ENCODE measurements at regions of chr12 and their contacts with region 1.

Region 1: DNA sequence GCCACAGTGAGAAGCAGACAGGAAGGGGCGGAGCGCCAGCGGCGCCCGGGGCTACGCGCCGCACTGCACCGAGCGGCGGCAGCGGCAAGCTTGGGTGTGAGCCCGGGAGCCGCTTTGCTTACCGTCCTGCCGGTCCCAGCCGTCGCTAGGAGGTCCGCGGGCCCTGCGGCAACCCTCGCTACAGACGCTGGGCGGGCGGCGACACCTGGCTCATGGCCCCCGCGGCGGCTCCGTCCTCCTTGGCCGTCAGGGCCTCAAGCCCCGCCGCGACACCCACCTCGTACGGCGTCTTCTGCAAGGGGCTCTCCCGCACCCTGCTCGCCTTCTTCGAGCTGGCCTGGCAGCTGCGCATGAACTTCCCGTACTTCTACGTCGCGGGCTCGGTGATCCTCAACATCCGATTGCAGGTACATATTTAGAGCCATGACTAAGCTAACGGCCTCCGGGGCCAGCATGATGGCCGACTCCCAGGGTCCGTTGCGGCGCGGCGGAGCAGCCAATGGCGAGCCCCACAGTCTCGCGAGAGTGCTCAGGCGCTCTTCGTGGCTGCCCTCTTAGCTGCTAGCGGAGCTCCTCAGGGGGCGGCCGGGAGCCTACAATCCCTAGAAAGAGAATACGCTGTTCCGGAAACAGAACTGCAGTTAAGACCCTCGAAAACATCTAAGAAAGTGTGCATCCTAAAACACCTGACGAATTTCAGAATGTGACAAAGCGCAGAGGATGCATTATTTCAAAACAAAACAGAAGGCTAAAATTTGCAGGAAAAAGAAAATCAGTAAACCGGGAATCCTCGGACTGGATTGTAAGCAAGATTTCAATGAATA is at the start of gene SMIM10L1:
- DNase-seq: peak; percentile 75
- ATAC-seq: peak; percentile 96
- H3K4me3 Mint-ChIP-seq: peak within 1 kb of the TSS; percentile 97
- H3K27ac Mint-ChIP-seq: peak within 1 kb of the TSS; percentile 95
- H3K4me1 Mint-ChIP-seq: peaks cover 52% of the 10 kb centered on the region
- H3K27me3 Mint-ChIP-seq: no peaks in the 10 kb centered on the region
- CTCF ChIP-seq: no peak
- total RNA-seq, gene SMIM10L1: 7.3 and 8.8 TPM in 2 replicates

Region 2: DNA sequence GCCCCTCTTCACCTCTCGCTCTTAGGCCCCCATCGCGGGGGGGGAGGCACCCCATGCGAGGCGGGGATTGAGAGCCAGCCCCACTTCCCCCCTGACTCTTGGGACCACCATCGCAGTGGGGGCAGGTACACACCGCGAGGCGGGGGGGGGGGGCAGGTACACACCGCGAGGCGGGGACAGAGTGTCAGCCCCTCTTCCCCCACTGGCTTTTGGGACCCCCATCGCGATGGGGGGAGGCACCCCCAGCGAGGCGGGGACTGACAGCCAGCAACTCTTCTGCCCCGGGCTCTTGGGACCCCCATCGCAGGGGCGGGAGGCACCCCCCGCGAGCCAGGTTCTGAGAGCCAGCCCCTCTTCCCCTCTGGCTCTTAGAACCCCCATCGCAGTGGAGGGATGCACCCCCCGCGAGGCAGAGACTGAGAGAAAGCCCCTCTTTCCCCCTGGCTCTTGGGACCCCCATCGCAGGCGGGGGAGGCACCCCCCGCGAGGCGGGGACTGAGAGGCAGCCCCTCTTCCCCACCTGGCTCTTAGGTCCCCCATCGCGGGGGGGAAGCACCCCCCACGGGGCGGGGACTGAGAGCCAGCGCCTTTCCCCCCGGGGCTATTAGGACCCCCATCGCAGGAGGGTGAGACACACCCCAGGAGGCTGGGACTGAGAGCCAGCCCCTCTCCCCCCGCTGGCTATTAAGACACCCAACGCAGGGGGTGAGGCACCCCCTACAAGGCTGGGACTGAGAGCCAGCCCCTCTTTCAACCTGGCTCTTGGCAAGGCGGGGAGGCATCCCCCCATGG is 1766.7 kb before region 1 on chr12:
- CTCF ChIA-PET with region 1: no interaction called
- POLR2A ChIA-PET with region 1: no interaction called
- intact Hi-C with region 1: no loop called
- DNase-seq: no peak
- ATAC-seq: no peak
- H3K4me3 Mint-ChIP-seq: no peak overlapping the region
- H3K27ac Mint-ChIP-seq: no peak overlapping the region
- H3K4me1 Mint-ChIP-seq: no peaks in the 10 kb centered on the region
- H3K27me3 Mint-ChIP-seq: no peaks in the 10 kb centered on the region
- CTCF ChIP-seq: no peak

Region 3: GRCh38 chr12:10212201-10213131 is 958.9 kb before region 1 on chr12 and contains the start of gene GABARAPL1:
- CTCF ChIA-PET with region 1: no interaction called
- POLR2A ChIA-PET with region 1: no interaction called
- intact Hi-C with region 1: loop called (anchors 10 kb)
- DNase-seq: peak; percentile 59
- ATAC-seq: peak; percentile 74
- H3K4me3 Mint-ChIP-seq: peak within 1 kb of the TSS; percentile 91
- H3K27ac Mint-ChIP-seq: peak within 1 kb of the TSS; percentile 46
- H3K4me1 Mint-ChIP-seq: peaks cover 17% of the 10 kb centered on the region
- H3K27me3 Mint-ChIP-seq: peaks cover 19% of the 10 kb centered on the region
- CTCF ChIP-seq: no peak
- total RNA-seq, gene GABARAPL1: 2.1 and 2.5 TPM in 2 replicates

Region 4: DNA sequence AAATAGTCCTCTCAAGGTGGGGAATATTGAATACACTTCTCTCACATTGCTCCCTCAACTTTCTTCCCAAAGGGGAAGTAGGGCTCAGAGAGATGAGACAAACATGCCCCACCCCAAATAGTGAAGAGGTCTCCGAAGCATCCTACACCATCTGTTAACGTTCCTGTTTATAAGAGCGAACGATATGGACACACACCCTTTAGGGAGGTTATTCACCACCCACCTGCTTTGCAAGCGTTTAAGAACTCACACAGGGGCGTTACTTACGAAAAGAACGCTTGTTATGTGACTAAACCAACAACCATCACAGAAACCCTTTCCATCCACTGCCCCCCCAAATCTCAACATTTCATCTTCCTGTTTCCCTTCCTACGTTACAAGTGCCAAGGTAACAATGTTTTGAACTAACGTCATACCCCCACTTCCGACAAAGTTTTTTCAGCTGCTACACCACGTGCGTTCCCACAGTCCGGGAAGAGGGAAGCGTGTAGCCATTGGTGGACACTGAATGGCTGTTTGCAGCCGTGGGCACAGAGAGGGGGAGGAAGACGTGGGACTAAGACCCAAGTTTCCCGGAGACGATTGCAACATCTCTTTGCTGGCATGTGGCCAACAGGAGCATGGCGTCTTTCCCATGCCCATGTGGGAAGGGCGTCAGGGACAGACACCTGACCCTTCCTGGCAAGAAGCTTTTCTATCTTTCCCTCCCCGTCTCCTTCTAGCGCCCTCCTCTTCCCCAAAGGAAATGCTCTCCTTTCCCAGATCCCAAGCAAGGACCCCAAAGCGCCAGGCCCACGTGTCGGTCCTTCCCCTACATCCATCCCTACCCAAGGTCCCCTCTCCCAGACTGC is 449.5 kb before region 1 on chr12:
- CTCF ChIA-PET with region 1: no interaction called
- POLR2A ChIA-PET with region 1: no interaction called
- intact Hi-C with region 1: loop called (anchors 1 kb)
- DNase-seq: peak; percentile 36
- ATAC-seq: peak; percentile 49
- H3K4me3 Mint-ChIP-seq: peak overlapping the region; percentile 88
- H3K27ac Mint-ChIP-seq: peak overlapping the region; percentile 91
- H3K4me1 Mint-ChIP-seq: peaks cover 33% of the 10 kb centered on the region
- H3K27me3 Mint-ChIP-seq: peaks cover 8% of the 10 kb centered on the region
- CTCF ChIP-seq: no peak

Region 5: GRCh38 chr12:11071414-11071813 is 99.9 kb before region 1 on chr12:
- CTCF ChIA-PET with region 1: no interaction called
- POLR2A ChIA-PET with region 1: no interaction called
- intact Hi-C with region 1: no loop called
- DNase-seq: no peak
- ATAC-seq: no peak
- H3K4me3 Mint-ChIP-seq: no peak overlapping the region
- H3K27ac Mint-ChIP-seq: no peak overlapping the region
- H3K4me1 Mint-ChIP-seq: peaks cover 29% of the 10 kb centered on the region
- H3K27me3 Mint-ChIP-seq: no peaks in the 10 kb centered on the region
- CTCF ChIP-seq: no peak

Region 6: GRCh38 chr12:11085419-11085818 is 85.9 kb before region 1 on chr12:
- CTCF ChIA-PET with region 1: no interaction called
- POLR2A ChIA-PET with region 1: interaction called, 4 read pairs
- intact Hi-C with region 1: loop called (anchors 2 kb)
- DNase-seq: no peak
- ATAC-seq: peak; percentile 85
- H3K4me3 Mint-ChIP-seq: no peak overlapping the region
- H3K27ac Mint-ChIP-seq: peak overlapping the region; percentile 68
- H3K4me1 Mint-ChIP-seq: peaks cover 9% of the 10 kb centered on the region
- H3K27me3 Mint-ChIP-seq: no peaks in the 10 kb centered on the region
- CTCF ChIP-seq: no peak

Region 7: DNA sequence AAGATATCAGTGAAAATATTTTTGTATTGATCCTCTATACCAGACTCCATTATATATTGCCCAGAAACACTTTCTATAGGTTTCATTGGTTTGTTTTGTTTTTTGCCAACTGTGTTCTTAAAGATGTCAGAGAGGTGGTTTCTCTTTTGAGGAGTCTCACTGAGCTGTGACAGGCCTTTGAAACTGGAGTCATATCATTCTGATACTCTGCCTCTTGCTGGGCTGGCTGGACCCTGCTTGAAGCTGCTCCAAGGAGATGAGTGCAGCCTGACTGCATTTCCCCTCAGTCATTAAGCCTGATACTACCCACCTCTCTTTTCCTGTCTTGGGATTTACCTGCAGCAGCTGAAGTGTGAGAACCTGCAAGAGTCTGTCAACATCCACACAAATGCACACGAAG is 20.5 kb before region 1 on chr12:
- CTCF ChIA-PET with region 1: no interaction called
- POLR2A ChIA-PET with region 1: no interaction called
- intact Hi-C with region 1: no loop called
- DNase-seq: no peak
- ATAC-seq: no peak
- H3K4me3 Mint-ChIP-seq: no peak overlapping the region
- H3K27ac Mint-ChIP-seq: no peak overlapping the region
- H3K4me1 Mint-ChIP-seq: peaks cover 1% of the 10 kb centered on the region
- H3K27me3 Mint-ChIP-seq: no peaks in the 10 kb centered on the region
- CTCF ChIP-seq: no peak

Region 8: DNA sequence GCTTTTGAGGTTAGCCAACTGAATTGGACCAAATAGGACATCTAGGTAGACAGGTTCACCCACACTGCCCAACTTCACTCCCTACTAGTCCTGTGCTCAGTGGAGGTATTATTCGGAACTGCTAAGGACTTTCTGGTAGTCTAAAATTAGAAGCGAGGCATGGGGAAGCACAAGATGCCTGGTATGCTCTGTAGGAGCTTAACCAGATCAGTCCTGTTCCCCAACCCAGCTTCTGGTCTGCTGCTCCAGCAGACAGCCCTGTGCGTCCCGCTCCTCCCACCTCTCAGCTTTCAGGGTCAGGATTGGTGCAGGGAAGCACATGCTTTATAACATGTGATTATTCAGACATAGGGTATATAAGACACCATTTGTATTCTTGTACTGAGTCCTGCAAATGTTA is 66.9 kb after region 1 on chr12:
- CTCF ChIA-PET with region 1: no interaction called
- POLR2A ChIA-PET with region 1: no interaction called
- intact Hi-C with region 1: no loop called
- DNase-seq: no peak
- ATAC-seq: no peak
- H3K4me3 Mint-ChIP-seq: no peak overlapping the region
- H3K27ac Mint-ChIP-seq: no peak overlapping the region
- H3K4me1 Mint-ChIP-seq: no peaks in the 10 kb centered on the region
- H3K27me3 Mint-ChIP-seq: no peaks in the 10 kb centered on the region
- CTCF ChIP-seq: no peak

Measured in activated B cell treated with CpG ODN at 0.5 μM for 24 hours (primary cell).